ENCODE measurements at regions of chr19 and their contacts with region 1.

Region 1: DNA sequence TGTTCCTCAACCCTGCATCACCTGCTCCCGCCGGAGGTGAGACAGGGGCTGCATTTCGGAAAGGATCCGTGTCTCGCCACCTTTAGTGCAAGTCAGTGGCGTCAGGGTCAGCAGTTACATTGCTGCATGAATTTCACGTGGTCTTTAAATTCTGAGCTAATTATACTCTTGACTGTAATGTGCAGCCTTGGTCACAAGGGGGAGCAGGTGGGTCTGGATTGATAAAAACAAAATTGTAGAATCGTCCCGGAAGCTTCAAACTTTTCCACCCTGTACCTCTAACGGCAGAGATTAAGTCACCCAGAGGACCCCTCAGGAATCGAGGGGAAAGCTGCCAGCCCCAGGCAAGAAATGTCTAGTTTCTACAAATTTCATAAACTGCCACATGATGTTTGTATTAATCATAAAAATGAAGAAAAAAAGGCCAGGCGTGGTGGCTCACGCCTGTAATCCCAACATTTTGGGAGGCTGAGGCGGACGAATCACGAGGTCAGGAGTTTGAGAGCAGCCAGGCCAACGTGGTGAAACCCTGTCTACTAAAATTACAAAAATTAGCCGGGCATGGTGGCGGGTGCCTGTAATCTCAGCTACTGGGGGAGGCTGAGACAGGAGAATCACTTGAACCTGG is 20.2 kb downstream of the BBC3 start:
- DNase-seq: peak; percentile 85
- H3K4me3 Mint-ChIP-seq: no peak overlapping the region
- H3K27ac Mint-ChIP-seq: peak overlapping the region; percentile 85
- H3K4me1 Mint-ChIP-seq: peaks cover 12% of the 10 kb centered on the region
- H3K27me3 Mint-ChIP-seq: no peaks in the 10 kb centered on the region

Region 2: GRCh38 chr19:47130591-47131227 is 80.1 kb before region 1 on chr19 and contains the start of gene SAE1:
- CTCF ChIA-PET with region 1: interaction called, 23 read pairs
- POLR2A ChIA-PET with region 1: no interaction called
- intact Hi-C with region 1: no loop called
- DNase-seq: peak; percentile 97
- H3K4me3 Mint-ChIP-seq: peak within 1 kb of the TSS; percentile 99
- H3K27ac Mint-ChIP-seq: peak within 1 kb of the TSS; percentile 94
- H3K4me1 Mint-ChIP-seq: peaks cover 47% of the 10 kb centered on the region
- H3K27me3 Mint-ChIP-seq: peaks cover 4% of the 10 kb centered on the region
- total RNA-seq, gene SAE1: 154 to 157 TPM

Region 3: DNA sequence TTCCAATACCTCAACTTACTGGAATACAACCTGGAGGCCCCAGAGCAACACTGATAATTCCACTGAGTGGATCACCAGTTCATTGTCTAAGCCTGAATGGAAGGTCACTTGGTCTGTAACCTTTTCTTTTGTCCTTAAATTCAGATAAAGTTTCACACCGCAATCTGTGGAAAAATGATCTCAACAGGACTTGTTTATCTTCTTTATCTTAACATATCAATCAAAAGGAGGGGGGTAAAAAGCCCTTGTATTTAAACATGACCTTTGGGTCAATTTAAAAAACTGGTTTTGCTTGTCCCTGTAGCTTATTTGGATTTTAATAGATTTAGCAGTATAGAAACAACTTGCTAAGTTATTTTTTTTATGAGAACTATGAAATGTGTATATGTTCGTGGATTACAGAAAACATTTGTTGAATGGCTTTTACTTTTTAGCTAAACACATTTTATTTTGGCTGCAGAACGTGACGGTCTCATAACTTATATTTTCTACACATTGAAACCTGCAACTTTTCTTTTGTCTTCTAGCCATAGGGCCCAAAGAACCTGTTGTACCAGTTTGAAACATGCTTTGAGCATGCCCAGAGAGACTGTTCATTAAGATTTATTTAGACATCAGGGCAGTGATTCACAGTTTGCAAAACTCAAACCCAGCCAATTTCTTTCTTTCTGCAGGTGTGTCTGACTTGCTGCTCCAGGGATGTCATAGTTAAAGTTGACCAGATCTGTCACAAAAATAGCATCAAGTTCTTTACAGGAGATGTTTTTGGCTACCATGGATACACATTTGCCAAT is 58.4 kb before region 1 on chr19:
- CTCF ChIA-PET with region 1: interaction called, 52 read pairs
- POLR2A ChIA-PET with region 1: no interaction called
- intact Hi-C with region 1: no loop called
- DNase-seq: no peak
- H3K4me3 Mint-ChIP-seq: no peak overlapping the region
- H3K27ac Mint-ChIP-seq: no peak overlapping the region
- H3K4me1 Mint-ChIP-seq: peaks cover 58% of the 10 kb centered on the region
- H3K27me3 Mint-ChIP-seq: no peaks in the 10 kb centered on the region

Region 4: GRCh38 chr19:47157431-47158321 is 53.1 kb before region 1 on chr19:
- CTCF ChIA-PET with region 1: interaction called, 28 read pairs
- POLR2A ChIA-PET with region 1: interaction called, 3 read pairs
- intact Hi-C with region 1: no loop called
- DNase-seq: peak; percentile 49
- H3K4me3 Mint-ChIP-seq: peak overlapping the region; percentile 43
- H3K27ac Mint-ChIP-seq: peak overlapping the region; percentile 84
- H3K4me1 Mint-ChIP-seq: peaks cover 64% of the 10 kb centered on the region
- H3K27me3 Mint-ChIP-seq: no peaks in the 10 kb centered on the region

Region 5: GRCh38 chr19:47176627-47177090 is 34.1 kb before region 1 on chr19:
- CTCF ChIA-PET with region 1: interaction called, 12 read pairs
- POLR2A ChIA-PET with region 1: no interaction called
- intact Hi-C with region 1: no loop called
- DNase-seq: peak; percentile 64
- H3K4me3 Mint-ChIP-seq: peak overlapping the region; percentile 49
- H3K27ac Mint-ChIP-seq: peak overlapping the region; percentile 90
- H3K4me1 Mint-ChIP-seq: peaks cover 61% of the 10 kb centered on the region
- H3K27me3 Mint-ChIP-seq: no peaks in the 10 kb centered on the region

Region 6: DNA sequence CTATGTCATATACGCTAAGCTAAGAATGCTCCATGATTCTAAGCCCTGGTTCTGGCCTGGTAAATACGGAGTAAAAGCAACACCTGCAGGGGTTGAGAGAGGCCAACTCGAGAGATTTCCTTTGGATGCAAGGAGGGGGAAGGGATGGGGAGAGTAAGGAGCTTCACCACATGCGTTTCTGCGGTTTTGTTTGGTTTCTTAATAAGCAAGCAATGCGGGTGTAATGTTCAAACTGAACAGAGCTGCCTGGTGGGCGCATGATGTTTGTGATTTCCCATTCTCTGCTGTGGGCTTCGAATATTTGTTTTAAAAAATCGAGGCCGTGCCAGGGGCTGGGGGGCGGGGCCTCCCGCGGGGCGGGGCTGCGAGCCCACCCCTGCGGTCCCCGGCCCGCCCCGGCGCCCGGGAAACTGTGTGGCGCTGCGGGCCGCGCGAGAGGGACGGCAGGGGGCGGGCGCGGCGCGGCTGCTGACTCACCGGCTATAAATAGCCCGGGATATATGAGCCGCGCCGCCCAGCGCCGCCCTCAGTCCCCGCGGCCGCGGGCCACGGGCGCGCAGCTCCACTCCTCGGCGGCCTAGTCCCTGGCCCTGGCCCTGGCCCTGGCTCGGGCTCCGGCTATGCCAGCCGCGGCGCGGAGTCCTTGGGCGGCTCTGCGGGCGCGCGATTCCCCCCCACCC is 15.1 kb after region 1 on chr19:
- CTCF ChIA-PET with region 1: interaction called, 48 read pairs
- POLR2A ChIA-PET with region 1: interaction called, 14 read pairs
- intact Hi-C with region 1: loop called (anchors 2 kb)
- DNase-seq: peak; percentile 88
- H3K4me3 Mint-ChIP-seq: peak overlapping the region; percentile 77
- H3K27ac Mint-ChIP-seq: peak overlapping the region; percentile 89
- H3K4me1 Mint-ChIP-seq: peaks cover 10% of the 10 kb centered on the region
- H3K27me3 Mint-ChIP-seq: no peaks in the 10 kb centered on the region

Measured in activated CD4-positive, alpha-beta memory T cell treated with anti-CD3 and anti-CD28 coated beads for 36 hours (primary cell).